ENCODE measurements at regions of chr17 and their contacts with region 1.

Region 1: GRCh38 chr17:7561028-7561575 is 617 bp upstream of the SENP3 start:
- DNase-seq: peak; percentile 79 to 85 (median 84)
- H3K4me3 ChIP-seq: peak overlapping the region; percentile 68 to 84 (median 77)
- H3K27ac ChIP-seq: peak overlapping the region; percentile 75 to 89
- H3K4me1 ChIP-seq: peaks cover 13 to 68% (median 59%) of the 10 kb centered on the region in 4 experiments
- H3K27me3 ChIP-seq: no peaks in the 10 kb centered on the region

Region 2: DNA sequence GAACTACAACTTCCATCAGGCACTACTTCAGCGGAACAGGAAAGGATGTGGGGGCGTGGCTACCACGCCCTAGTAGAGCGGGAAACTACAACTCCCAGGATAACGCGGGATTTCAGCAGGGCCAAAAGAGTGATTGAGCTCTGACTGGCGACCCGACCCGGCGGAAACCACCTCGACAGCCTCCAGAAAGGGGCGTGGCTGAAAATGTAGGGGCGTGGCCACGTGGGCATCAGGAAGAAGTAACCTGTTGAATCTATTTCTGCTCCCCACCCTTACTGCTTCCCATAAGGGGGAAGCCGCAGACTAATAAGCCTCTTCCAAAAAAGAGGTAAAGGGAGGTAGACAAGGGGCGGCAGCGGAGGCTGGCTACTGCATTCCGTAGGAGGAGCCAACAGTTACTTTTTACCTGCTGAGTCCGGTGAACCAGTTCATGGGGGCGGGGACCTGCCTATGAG is 125.9 kb before region 1 on chr17 and contains the start of gene TMEM102:
- CTCF ChIA-PET with region 1: interaction called, 13 read pairs
- POLR2A ChIA-PET with region 1: interaction called, 3 read pairs
- DNase-seq: peak; percentile 98 to 100 (median 99)
- H3K4me3 ChIP-seq: peak within 1 kb of the TSS; percentile 62 to 95 (median 86)
- H3K27ac ChIP-seq: peak within 1 kb of the TSS; percentile 25 to 55
- H3K4me1 ChIP-seq: peaks cover 0 to 49% (median 45%) of the 10 kb centered on the region in 4 experiments
- H3K27me3 ChIP-seq: peaks cover 0 to 25% (median 9%) of the 10 kb centered on the region in 5 experiments

Region 3: DNA sequence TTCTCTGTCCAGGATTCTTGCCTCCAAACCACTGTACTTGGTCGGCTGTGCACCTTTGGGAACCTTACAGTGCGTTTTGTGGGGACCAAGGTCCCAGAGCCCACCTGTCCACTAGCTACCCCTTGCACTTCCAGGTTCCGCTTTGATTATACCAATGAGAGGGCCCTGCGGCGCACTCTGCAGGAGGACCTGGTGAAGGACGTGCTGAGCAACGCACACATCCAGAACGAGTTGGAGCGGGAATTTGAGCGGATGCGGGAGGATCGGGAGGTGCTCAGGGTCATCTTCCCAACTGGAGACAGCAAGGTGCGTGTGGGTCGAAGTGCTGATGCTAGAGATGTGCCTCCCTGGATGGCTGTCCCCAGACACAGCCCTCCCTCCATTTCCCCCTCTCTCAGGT is 58.1 kb before region 1 on chr17:
- CTCF ChIA-PET with region 1: interaction called, 515 read pairs
- POLR2A ChIA-PET with region 1: interaction called, 4 read pairs
- DNase-seq: peak in 1 of 3 donors; percentile 40
- H3K4me3 ChIP-seq: no peak overlapping the region
- H3K27ac ChIP-seq: no peak overlapping the region
- H3K4me1 ChIP-seq: no peaks in the 10 kb centered on the region
- H3K27me3 ChIP-seq: no peaks in the 10 kb centered on the region

Region 4: GRCh38 chr17:7523033-7523432 is 38.1 kb before region 1 on chr17:
- CTCF ChIA-PET with region 1: interaction called, 515 read pairs
- POLR2A ChIA-PET with region 1: interaction called, 5 read pairs
- DNase-seq: peak; percentile 57 to 79 (median 74)
- H3K4me3 ChIP-seq: no peak overlapping the region
- H3K27ac ChIP-seq: no peak overlapping the region
- H3K4me1 ChIP-seq: peaks cover 0 to 3% (median 0%) of the 10 kb centered on the region in 4 experiments
- H3K27me3 ChIP-seq: no peaks in the 10 kb centered on the region

Region 5: DNA sequence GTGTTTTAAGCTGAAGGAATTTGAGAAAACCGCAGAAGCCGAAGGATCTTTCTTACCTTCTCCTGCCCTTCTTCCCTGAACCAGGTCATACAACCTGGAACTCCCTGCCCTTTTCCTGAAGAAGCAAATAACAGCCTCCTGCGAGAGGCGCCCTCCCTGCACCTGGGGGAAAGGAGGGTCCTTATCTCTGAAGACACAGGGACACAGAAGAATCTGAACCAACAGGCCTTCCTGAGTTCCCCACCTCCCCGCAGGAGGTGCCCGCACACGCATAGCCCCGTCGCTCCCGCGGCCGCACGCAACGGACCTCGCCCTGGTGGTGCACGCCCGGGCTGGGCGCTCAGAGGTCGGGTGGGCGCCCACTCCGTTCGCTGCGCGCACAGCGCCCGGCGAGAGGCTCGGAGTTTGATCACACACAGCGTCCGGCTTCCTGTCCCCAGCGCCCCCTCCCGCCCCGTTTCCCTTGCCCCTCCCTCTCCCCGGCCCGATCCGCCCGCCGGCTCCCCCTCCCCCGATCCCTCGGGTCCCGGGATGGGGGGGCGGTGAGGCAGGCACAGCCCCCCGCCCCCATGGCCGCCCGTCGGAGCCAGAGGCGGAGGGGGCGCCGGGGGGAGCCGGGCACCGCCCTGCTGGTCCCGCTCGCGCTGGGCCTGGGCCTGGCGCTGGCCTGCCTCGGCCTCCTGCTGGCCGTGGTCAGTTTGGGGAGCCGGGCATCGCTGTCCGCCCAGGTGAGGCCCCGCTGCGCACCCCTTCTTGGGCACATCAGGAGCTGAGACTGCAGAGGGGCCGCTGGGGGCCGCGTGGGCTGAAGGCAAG is 12.3 kb before region 1 on chr17 and contains the start of gene TNFSF12:
- CTCF ChIA-PET with region 1: interaction called, 35 read pairs
- POLR2A ChIA-PET with region 1: interaction called, 9 read pairs
- DNase-seq: peak in 2 of 3 donors; percentile 67 to 78
- H3K4me3 ChIP-seq: peak within 1 kb of the TSS; percentile 27 to 83 (median 64)
- H3K27ac ChIP-seq: peak within 1 kb of the TSS in 1 of 2 experiments; percentile 43
- H3K4me1 ChIP-seq: peaks cover 5 to 58% (median 52%) of the 10 kb centered on the region in 4 experiments
- H3K27me3 ChIP-seq: no peaks in the 10 kb centered on the region

Region 6: GRCh38 chr17:7583253-7584109 is 22.4 kb after region 1 on chr17 and contains the start of gene MPDU1:
- CTCF ChIA-PET with region 1: interaction called, 31 read pairs
- POLR2A ChIA-PET with region 1: interaction called, 5 read pairs
- DNase-seq: peak; percentile 95 to 98 (median 98)
- H3K4me3 ChIP-seq: peak within 1 kb of the TSS; percentile 56 to 98 (median 92)
- H3K27ac ChIP-seq: peak within 1 kb of the TSS; percentile 99
- H3K4me1 ChIP-seq: peaks cover 4 to 74% (median 66%) of the 10 kb centered on the region in 4 experiments
- H3K27me3 ChIP-seq: no peaks in the 10 kb centered on the region